ENCODE measurements at regions of chr17 and their contacts with region 1.

Region 1: GRCh38 chr17:46940621-46941404 is 17.9 kb downstream of the GOSR2 start:
- DNase-seq: no peak
- ATAC-seq: peak; percentile 90
- H3K4me3 ChIP-seq: no peak overlapping the region
- H3K27ac ChIP-seq: no peak overlapping the region
- H3K4me1 ChIP-seq: no peaks in the 10 kb centered on the region
- H3K27me3 ChIP-seq: no peaks in the 10 kb centered on the region
- CTCF ChIP-seq: peak; percentile 88 to 92 (median 91); a peak in 5 of 6 replicates
- EP300 ChIP-seq: no peak
- POLR2A ChIP-seq: peak; percentile 35; the same call in 1 of the 2 replicates
- RAD21 ChIP-seq: peak; percentile 75

Region 2: DNA sequence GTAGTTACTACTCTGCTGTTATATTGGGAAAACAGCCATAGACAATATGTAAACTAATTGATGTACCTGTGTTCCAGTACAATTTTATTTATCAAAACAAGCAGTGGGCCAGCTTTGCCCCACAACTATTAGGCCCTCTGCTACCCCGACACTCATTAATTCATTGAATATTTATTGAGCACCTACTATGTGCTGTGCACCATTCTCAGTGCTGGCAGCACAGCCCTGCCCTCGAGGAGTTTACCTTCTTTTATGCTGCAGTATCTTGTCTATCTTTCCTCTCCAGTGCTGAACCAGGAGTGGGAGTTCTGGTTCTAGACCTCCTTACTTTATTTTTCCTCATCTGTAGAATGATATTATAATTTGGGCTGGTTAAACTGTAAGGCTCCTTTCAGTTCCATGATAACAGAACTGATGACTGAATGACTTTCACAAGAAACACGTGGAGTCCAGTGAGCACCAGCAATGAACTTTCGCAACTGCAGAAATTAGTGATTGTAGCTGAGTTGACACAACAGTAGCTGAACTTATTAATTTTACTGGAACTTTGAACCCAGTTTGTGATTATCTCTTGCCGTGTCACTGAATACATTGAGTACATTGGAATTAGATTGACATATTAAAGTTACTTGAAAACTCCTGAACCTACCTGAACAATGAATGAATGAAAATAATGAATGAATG is 15.5 kb before region 1 on chr17:
- CTCF ChIA-PET with region 1: interaction called, 12 read pairs
- POLR2A ChIA-PET with region 1: no interaction called
- RAD21 ChIA-PET with region 1: no interaction called
- SMC1A ChIA-PET with region 1: no interaction called
- in situ Hi-C with region 1: no loop called
- intact Hi-C with region 1: no loop called
- DNase-seq: no peak
- ATAC-seq: no peak
- H3K4me3 ChIP-seq: peak overlapping the region; percentile 80; the same call in 1 of the 2 replicates
- H3K27ac ChIP-seq: no peak overlapping the region
- H3K4me1 ChIP-seq: 0 out of 2 replicates have a peak, but pooled peaks cover 4% of the 10 kb centered on the region
- H3K27me3 ChIP-seq: no peaks in the 10 kb centered on the region
- CTCF ChIP-seq: no peak
- EP300 ChIP-seq: no peak
- POLR2A ChIP-seq: no peak
- RAD21 ChIP-seq: no peak

Region 3: DNA sequence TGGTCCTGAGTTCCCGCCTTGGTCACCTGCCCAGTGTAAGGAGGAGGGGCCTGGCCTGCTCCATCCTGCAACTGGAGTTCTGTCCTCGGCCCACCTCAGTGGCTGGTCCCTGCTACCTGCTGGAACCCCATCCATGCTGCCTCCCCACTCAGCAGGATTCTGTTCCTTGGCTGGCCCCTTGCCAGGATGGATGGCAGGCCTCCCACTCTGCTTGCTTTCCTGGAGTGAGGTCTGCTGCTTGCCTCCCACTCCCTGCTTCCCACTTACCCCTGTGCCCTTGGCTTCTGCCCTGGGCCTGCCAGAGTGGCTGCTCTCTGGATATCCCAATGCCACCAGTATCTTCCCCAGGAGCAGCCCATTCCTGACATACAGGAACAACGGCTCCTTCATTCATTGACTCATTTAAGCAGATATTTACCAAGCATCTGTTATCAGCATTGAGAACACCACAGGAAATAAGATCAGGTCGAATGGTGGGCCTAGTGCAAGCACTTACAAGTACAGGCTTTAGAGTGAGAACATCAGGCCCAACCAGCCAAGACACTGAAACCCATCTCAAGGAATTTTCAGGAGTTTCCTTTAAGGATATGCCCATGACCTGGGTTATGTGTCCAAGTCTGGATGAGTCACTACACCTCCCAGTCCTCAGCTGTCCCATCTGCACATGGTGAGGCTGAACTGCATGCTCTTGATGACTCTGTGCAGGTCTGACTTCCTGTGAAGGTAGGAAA is 55.2 kb after region 1 on chr17:
- CTCF ChIA-PET with region 1: interaction called, 43 read pairs
- POLR2A ChIA-PET with region 1: no interaction called
- RAD21 ChIA-PET with region 1: interaction called, 3 read pairs
- SMC1A ChIA-PET with region 1: interaction called, 7 read pairs
- in situ Hi-C with region 1: no loop called
- intact Hi-C with region 1: no loop called
- DNase-seq: no peak
- ATAC-seq: no peak
- H3K4me3 ChIP-seq: no peak overlapping the region
- H3K27ac ChIP-seq: no peak overlapping the region
- H3K4me1 ChIP-seq: no peaks in the 10 kb centered on the region
- H3K27me3 ChIP-seq: no peaks in the 10 kb centered on the region
- CTCF ChIP-seq: no peak
- EP300 ChIP-seq: no peak
- POLR2A ChIP-seq: no peak
- RAD21 ChIP-seq: no peak